ENCODE measurements at regions of chr4 and their contacts with region 1.

Region 1: DNA sequence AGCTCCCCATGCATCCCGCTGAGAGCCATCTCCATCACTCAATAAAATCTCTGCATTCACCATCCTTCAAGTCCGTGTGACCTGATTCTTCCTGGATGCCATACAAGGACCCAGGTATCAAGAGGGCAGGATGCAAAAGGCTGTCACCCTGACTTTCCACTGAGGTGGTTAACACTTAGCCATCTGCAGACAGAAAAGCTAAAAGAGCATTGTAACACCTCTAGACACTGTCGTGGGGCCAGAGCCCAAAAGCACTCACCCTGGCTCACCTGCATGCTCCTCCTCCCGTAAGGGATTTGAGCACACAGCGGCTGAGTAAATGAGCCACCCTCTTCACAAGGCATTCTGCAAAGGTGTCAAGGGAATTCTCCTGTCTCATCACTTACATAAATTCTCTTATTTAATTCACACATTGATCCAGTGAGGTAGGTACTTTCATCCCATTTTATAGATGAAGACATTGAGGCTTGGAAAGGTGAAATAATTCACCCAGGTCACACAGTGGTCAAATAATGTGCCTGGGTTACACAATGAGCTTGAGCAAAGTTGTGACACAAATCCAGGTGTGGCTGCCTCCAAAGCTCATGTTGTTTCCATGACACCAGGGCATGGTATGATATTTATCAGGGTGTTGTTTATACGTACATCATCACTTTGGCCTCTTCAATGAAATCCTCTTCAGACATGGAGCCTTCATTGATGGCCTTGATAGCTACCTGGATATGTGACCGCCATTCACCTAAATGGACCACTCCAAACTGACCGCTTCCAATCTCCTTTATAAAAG is 48.0 kb downstream of the TXK start:
- DNase-seq: no peak
- H3K4me3 Mint-ChIP-seq: no peak overlapping the region
- H3K27ac Mint-ChIP-seq: no peak overlapping the region
- H3K4me1 Mint-ChIP-seq: no peaks in the 10 kb centered on the region
- H3K27me3 Mint-ChIP-seq: no peaks in the 10 kb centered on the region

Region 2: GRCh38 chr4:47686294-47686872 is 399.6 kb before region 1 on chr4:
- intact Hi-C with region 1: loop called (anchors 1 kb)
- DNase-seq: peak; percentile 29
- H3K4me3 Mint-ChIP-seq: no peak overlapping the region
- H3K27ac Mint-ChIP-seq: no peak overlapping the region
- H3K4me1 Mint-ChIP-seq: no peaks in the 10 kb centered on the region
- H3K27me3 Mint-ChIP-seq: peaks cover 8% of the 10 kb centered on the region

Region 3: DNA sequence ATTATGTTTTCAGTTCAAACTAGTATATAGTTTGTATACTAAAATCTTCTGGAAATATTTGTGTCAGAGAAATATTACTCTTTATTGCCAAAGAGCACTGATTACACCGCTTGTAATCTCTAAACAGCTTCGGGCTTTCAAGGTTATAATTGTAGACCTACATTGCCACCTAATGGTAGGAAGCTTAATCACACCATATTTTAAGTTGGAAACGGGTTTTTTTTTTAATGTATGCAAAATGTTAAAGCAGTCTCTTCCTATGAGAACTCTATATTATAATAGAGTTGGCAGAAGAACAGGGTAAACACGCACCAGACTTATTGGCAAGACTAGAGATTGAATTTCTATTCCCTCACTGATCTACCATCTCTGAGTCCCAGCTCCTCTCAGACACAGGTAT is 152.2 kb before region 1 on chr4:
- intact Hi-C with region 1: loop called (anchors 2 kb)
- DNase-seq: no peak
- H3K4me3 Mint-ChIP-seq: no peak overlapping the region
- H3K27ac Mint-ChIP-seq: no peak overlapping the region
- H3K4me1 Mint-ChIP-seq: no peaks in the 10 kb centered on the region
- H3K27me3 Mint-ChIP-seq: peaks cover 6% of the 10 kb centered on the region

Region 4: GRCh38 chr4:48016141-48017103 is 69.6 kb before region 1 on chr4 and contains the starts of genes CNGA1 and NIPAL1:
- intact Hi-C with region 1: loop called (anchors 1 kb)
- DNase-seq: peak; percentile 51
- H3K4me3 Mint-ChIP-seq: peak within 1 kb of the TSS; percentile 80
- H3K27ac Mint-ChIP-seq: peak within 1 kb of the TSS; percentile 48
- H3K4me1 Mint-ChIP-seq: peaks cover 12% of the 10 kb centered on the region
- H3K27me3 Mint-ChIP-seq: peaks cover 28% of the 10 kb centered on the region
- total RNA-seq, gene CNGA1: not detected in 2 replicates
- total RNA-seq, gene NIPAL1: 2.0 and 2.5 TPM in 2 replicates

Region 5: GRCh38 chr4:48065587-48066052 is 20.4 kb before region 1 on chr4:
- intact Hi-C with region 1: loop called (anchors 2 kb)
- DNase-seq: no peak
- H3K4me3 Mint-ChIP-seq: no peak overlapping the region
- H3K27ac Mint-ChIP-seq: no peak overlapping the region
- H3K4me1 Mint-ChIP-seq: no peaks in the 10 kb centered on the region
- H3K27me3 Mint-ChIP-seq: peaks cover 2% of the 10 kb centered on the region

Region 6: GRCh38 chr4:48141048-48141447 is 55.0 kb after region 1 on chr4:
- intact Hi-C with region 1: loop called (anchors 1 kb)
- DNase-seq: no peak
- H3K4me3 Mint-ChIP-seq: no peak overlapping the region
- H3K27ac Mint-ChIP-seq: peak overlapping the region; percentile 1
- H3K4me1 Mint-ChIP-seq: peaks cover 52% of the 10 kb centered on the region
- H3K27me3 Mint-ChIP-seq: no peaks in the 10 kb centered on the region